Endothelial cell of umbilical vein (primary cell): ENCODE measurements at regions of chr12 and their contacts with region 1.

Region 1: DNA sequence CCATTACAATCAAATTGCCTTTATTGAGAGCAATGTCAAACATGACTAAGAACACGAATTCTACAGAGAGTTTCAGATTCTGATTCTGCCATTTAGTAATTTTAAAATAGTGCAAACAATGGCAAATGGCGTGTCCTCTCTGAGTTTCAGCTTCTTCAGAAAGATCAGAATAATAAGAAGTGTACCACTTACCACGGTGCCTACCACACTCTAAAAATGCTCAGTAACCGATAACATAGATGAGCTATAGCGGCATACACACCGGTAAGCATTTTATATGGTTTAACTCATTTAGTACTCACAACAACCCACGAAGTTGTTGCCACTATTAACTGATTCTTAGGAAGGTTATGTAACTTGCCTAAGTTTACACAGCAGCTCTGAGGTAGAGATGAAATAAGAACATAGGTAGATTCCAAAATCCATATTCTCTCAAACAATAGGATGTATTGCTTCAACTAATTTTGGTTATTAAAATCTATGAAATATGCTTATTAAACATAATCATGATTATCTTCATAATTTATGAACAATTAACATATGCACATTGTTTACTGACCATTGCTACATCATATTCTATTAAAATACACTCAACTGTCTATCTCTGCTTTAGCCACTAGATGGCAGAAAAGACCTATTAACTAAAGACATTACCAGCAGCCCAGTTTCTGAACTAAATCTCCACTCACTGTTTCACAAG is 38.3 kb downstream of the SLC6A15 start:
- DNase-seq: peak; percentile 55
- H3K4me3 ChIP-seq: no peak overlapping the region
- H3K27ac ChIP-seq: no peak overlapping the region
- H3K4me1 ChIP-seq: no peaks in the 10 kb centered on the region
- H3K27me3 ChIP-seq: peaks cover 0 to 2% of the 10 kb centered on the region in 2 experiments
- CTCF ChIP-seq: peak; percentile 45 to 49
- POLR2A ChIP-seq: no peak

Region 2: GRCh38 chr12:84891106-84891838 is 17.0 kb after region 1 on chr12:
- CTCF ChIA-PET with region 1: interaction called, 18 read pairs
- POLR2A ChIA-PET with region 1: no interaction called
- dilution Hi-C with region 1: no loop called
- intact Hi-C with region 1: no loop called
- DNase-seq: no peak
- H3K4me3 ChIP-seq: no peak overlapping the region
- H3K27ac ChIP-seq: no peak overlapping the region
- H3K4me1 ChIP-seq: no peaks in the 10 kb centered on the region
- H3K27me3 ChIP-seq: peaks cover 0 to 2% of the 10 kb centered on the region in 2 experiments
- CTCF ChIP-seq: no peak
- POLR2A ChIP-seq: no peak

Region 3: DNA sequence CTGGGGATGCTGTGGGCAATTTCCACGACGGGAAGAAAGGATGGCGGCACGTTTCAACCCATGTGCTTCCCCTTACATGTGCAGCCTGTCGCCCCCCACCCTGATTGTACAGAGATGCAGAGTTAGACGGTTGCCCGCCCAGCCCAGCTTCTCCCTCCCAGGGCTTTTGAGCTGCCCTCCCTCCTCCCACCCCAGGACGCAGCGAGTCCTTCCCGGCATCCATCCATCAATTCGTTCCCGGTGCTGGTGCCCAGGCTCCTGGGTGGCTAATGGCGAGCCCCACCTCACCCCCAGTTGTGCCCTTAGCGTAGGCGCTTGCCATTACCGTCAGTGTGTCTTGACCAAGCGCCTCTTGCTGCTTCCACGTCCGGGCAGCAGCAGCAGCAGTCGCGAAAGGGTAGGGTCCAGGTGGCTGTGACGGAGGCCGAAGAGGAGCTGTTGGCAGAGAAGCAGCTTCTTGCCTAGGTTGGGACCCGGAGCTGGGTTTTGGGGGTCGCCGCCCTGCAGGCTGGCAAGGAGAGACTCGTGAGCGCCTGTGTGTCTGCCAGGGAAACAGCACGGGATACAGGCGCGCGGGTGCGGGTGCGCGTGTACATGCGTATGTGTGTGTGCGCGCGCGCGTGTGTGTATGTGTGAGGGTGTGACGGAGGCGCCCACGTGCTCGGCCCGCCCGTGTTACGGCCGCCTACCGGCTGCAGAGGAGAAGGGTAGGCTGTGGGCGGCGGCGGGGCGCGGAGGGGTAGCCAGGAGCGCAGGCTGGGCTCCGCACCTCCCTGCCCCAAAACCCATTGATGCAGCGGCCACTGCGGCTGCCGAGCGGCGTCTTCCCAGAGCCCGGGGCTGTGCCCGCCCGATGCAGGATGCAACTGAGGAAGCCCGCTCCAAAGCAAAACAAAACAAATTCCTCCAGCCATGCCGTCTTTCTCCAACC is 38.2 kb after region 1 on chr12 and contains the start of gene SLC6A15:
- CTCF ChIA-PET with region 1: interaction called, 4 read pairs
- POLR2A ChIA-PET with region 1: no interaction called
- dilution Hi-C with region 1: no loop called
- intact Hi-C with region 1: loop called (anchors 2 kb)
- DNase-seq: peak; percentile 27
- H3K4me3 ChIP-seq: peak within 1 kb of the TSS; percentile 40 to 71 (median 70)
- H3K27ac ChIP-seq: no peak within 1 kb of the TSS
- H3K4me1 ChIP-seq: peaks cover 23% of the 10 kb centered on the region
- H3K27me3 ChIP-seq: peaks cover 19 to 34% of the 10 kb centered on the region in 2 experiments
- CTCF ChIP-seq: peak; percentile 42 to 51
- POLR2A ChIP-seq: no peak
- total RNA-seq, gene SLC6A15: 0.24 and 1.1 TPM in 2 replicates

Region 4: DNA sequence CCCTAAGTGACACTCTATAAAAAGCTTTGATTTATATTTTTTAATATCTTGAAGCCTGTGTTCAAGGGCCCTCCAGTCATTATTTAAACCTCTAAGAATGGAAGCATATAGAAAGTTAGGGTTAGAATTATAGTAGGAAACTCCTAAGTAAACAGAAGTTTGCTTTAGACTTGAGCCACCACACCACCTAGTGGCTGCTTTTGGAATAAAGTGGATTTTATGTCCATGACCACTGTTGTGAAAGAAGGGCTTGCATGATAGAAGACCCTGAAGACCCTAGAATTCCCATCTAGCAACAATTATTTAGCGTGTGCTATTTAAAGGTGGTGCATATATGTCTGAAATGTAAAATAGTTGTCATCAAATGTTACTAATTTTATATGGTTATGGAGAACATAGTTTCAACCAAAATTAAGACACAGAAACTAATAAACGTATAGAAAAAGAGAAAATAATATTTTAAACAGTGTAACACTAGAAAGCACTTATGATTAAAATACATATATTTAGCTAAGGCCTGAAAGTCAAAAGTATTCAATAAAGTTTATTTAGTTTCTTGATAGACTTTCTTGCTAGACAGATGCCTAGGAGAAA is 183.2 kb after region 1 on chr12:
- CTCF ChIA-PET with region 1: interaction called, 73 read pairs
- POLR2A ChIA-PET with region 1: no interaction called
- dilution Hi-C with region 1: no loop called
- intact Hi-C with region 1: loop called (anchors 1 kb)
- DNase-seq: peak; percentile 58
- H3K4me3 ChIP-seq: no peak overlapping the region
- H3K27ac ChIP-seq: no peak overlapping the region
- H3K4me1 ChIP-seq: no peaks in the 10 kb centered on the region
- H3K27me3 ChIP-seq: peaks cover 4 to 17% of the 10 kb centered on the region in 2 experiments
- CTCF ChIP-seq: peak; percentile 52 to 68
- POLR2A ChIP-seq: no peak

Region 5: DNA sequence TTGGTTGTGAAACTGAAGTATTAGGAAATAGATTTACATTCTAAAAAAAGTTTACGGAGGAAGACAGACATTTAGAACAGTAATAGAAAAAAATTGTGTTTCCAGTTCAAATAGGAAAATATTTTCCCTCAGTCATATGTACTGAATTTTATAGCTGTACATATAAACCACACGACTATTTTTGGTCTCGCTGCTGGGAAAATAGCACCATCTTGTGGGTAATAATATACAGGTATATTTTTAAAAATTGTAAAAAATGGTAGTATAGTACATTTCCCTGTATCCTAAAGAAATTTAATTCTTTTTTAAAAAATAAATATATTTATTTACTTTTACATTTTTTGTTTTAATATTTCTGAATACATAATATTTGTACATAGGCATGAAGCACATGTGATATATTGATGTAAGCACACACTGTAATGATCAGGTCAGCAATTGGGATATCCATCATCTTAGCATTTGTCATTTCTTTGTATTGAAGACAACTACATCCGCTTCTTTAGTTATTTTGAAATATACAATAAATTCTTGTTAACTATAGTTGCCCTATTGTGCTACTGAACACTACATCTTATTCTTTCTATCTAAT is 574.4 kb after region 1 on chr12:
- CTCF ChIA-PET with region 1: interaction called, 7 read pairs
- POLR2A ChIA-PET with region 1: no interaction called
- dilution Hi-C with region 1: no loop called
- intact Hi-C with region 1: loop called (anchors 2 kb)
- DNase-seq: peak; percentile 42
- H3K4me3 ChIP-seq: no peak overlapping the region
- H3K27ac ChIP-seq: no peak overlapping the region
- H3K4me1 ChIP-seq: no peaks in the 10 kb centered on the region
- H3K27me3 ChIP-seq: no peaks in the 10 kb centered on the region
- CTCF ChIP-seq: no peak
- POLR2A ChIP-seq: no peak